ENCODE measurements at regions of chr5 and their contacts with region 1.

Region 1: GRCh38 chr5:172860520-172861443 is 26.7 kb downstream of the ERGIC1 start:
- DNase-seq: no peak
- ATAC-seq: no peak
- H3K4me3 ChIP-seq: peak overlapping the region in 1 of 3 experiments; percentile 6; a peak in 1 of 6 replicates
- H3K27ac ChIP-seq: peak overlapping the region; percentile 99
- H3K4me1 ChIP-seq: peaks cover 87% of the 10 kb centered on the region
- H3K27me3 ChIP-seq: no peaks in the 10 kb centered on the region
- CTCF ChIP-seq: no peak
- EP300 ChIP-seq: no peak
- POLR2A ChIP-seq: no peak
- RAD21 ChIP-seq: no peak

Region 2: GRCh38 chr5:172724242-172725183 is 136.3 kb before region 1 on chr5:
- CTCF ChIA-PET with region 1: no interaction called
- POLR2A ChIA-PET with region 1: interaction called, 11 read pairs
- in situ Hi-C with region 1: no loop called
- intact Hi-C with region 1: no loop called
- DNase-seq: peak; percentile 64
- ATAC-seq: peak; percentile 65
- H3K4me3 ChIP-seq: peak overlapping the region in 1 of 3 experiments; percentile 30; a peak in 2 of 6 replicates
- H3K27ac ChIP-seq: no peak overlapping the region
- H3K4me1 ChIP-seq: peaks cover 82% of the 10 kb centered on the region
- H3K27me3 ChIP-seq: peaks cover 4 to 28% of the 10 kb centered on the region in 2 experiments; a peak in 4 of 5 replicates
- CTCF ChIP-seq: no peak
- EP300 ChIP-seq: peak in 1 of 2 experiments; percentile 64; a peak in 1 of 4 replicates
- POLR2A ChIP-seq: no peak
- RAD21 ChIP-seq: no peak

Region 3: GRCh38 chr5:172770675-172771438 is 89.9 kb before region 1 on chr5 and contains the start of gene DUSP1:
- CTCF ChIA-PET with region 1: interaction called, 6 read pairs
- POLR2A ChIA-PET with region 1: interaction called, 351 read pairs
- in situ Hi-C with region 1: loop called (anchors 10 kb)
- intact Hi-C with region 1: loop called (anchors 2 kb)
- DNase-seq: peak; percentile 88
- ATAC-seq: peak; percentile 64
- H3K4me3 ChIP-seq: peak within 1 kb of the TSS; percentile 90 to 94 (median 92)
- H3K27ac ChIP-seq: peak within 1 kb of the TSS; percentile 98
- H3K4me1 ChIP-seq: peaks cover 80% of the 10 kb centered on the region
- H3K27me3 ChIP-seq: no peaks in the 10 kb centered on the region; a peak in 1 of 5 replicates
- CTCF ChIP-seq: peak; percentile 64
- EP300 ChIP-seq: no peak
- POLR2A ChIP-seq: peak in 1 of 2 experiments; percentile 98; a peak in 2 of 4 replicates
- RAD21 ChIP-seq: peak; percentile 97
- total RNA-seq, gene DUSP1: 18.0 and 27.1 TPM in 2 replicates

Region 4: GRCh38 chr5:172816901-172817564 is 43.7 kb before region 1 on chr5:
- CTCF ChIA-PET with region 1: no interaction called
- POLR2A ChIA-PET with region 1: interaction called, 12 read pairs
- in situ Hi-C with region 1: no loop called
- intact Hi-C with region 1: no loop called
- DNase-seq: no peak
- ATAC-seq: peak; percentile 72
- H3K4me3 ChIP-seq: peak overlapping the region in 1 of 3 experiments; percentile 29; a peak in 2 of 6 replicates
- H3K27ac ChIP-seq: no peak overlapping the region
- H3K4me1 ChIP-seq: peaks cover 44% of the 10 kb centered on the region
- H3K27me3 ChIP-seq: no peaks in the 10 kb centered on the region
- CTCF ChIP-seq: peak; percentile 37
- EP300 ChIP-seq: no peak
- POLR2A ChIP-seq: no peak
- RAD21 ChIP-seq: no peak

Region 5: DNA sequence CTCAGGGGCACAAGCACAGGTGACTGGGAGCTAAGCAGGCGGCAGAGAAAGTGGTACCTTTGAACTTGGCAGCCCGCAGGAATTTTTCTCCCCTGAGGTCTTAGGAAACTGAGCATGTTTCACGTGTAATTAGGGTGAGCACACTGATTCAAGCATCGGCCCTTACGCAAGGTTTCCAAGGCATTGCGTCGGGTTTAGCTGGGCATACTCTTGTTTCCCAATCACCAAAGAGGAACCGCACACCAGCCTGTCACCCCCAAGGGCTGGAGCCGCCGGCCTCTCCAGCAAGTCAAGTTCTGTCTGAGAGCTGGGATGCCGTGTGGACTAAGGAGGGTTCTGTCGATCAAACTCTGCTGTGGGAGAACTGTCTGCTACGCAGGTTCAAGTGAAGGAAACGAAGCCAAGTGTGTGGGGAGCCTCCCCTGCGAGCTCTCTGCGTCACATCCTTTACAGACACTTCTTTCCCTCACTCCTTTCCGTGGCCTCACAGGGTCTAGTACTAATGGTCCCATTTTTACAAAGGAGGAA is 26.3 kb after region 1 on chr5:
- CTCF ChIA-PET with region 1: no interaction called
- POLR2A ChIA-PET with region 1: interaction called, 30 read pairs
- in situ Hi-C with region 1: no loop called
- intact Hi-C with region 1: no loop called
- DNase-seq: peak; percentile 85
- ATAC-seq: peak; percentile 64
- H3K4me3 ChIP-seq: no peak overlapping the region
- H3K27ac ChIP-seq: peak overlapping the region; percentile 41
- H3K4me1 ChIP-seq: peaks cover 18% of the 10 kb centered on the region
- H3K27me3 ChIP-seq: no peaks in the 10 kb centered on the region
- CTCF ChIP-seq: no peak
- EP300 ChIP-seq: peak; percentile 35 to 67; a peak in 1 of 4 replicates
- POLR2A ChIP-seq: no peak
- RAD21 ChIP-seq: no peak

Region 6: DNA sequence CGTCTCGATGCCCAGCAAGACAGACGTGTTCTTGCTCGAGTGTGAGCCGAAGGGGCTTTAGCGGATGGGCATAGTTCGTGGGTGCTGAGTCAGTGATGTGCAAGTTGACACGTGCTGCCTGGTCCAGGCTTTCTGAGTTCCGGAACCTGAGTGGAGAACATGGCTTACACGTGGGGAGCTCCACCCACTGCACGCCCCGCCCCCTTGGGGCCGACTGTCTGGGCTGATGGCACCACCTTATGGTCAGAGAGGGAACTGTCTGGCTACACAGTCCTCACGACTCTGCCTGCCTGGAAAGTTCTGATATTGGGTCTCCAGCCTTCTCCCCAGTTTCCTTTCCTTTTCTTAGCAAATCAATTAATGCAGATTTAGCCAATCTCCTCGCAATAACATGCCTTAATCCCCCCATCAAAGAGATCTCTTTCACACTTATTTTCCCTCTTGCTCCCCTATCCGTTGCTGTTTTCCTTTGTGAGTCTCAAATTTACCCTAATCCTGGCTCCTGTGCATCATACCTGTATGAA is 471.2 kb after region 1 on chr5:
- CTCF ChIA-PET with region 1: no interaction called
- POLR2A ChIA-PET with region 1: interaction called, 10 read pairs
- in situ Hi-C with region 1: no loop called
- intact Hi-C with region 1: no loop called
- DNase-seq: peak; percentile 74
- ATAC-seq: peak; percentile 20
- H3K4me3 ChIP-seq: no peak overlapping the region
- H3K27ac ChIP-seq: no peak overlapping the region
- H3K4me1 ChIP-seq: peaks cover 27% of the 10 kb centered on the region
- H3K27me3 ChIP-seq: no peaks in the 10 kb centered on the region; a peak in 1 of 5 replicates
- CTCF ChIP-seq: peak; percentile 99
- EP300 ChIP-seq: no peak
- POLR2A ChIP-seq: no peak
- RAD21 ChIP-seq: peak; percentile 98

Measured in HepG2 (cell line).